Dendritic cell treated with granulocyte-macrophage colony-stimulating factor and Interleukin-4, amounts not matched to agents 40 ng/mL and 50 ng/mL, for 4 days (primary cell): ENCODE measurements at regions of chr11 and their contacts with region 1.

Region 1: GRCh38 chr11:107565219-107565937 is at the start of gene ALKBH8:
- H3K4me3 Mint-ChIP-seq: peak within 1 kb of the TSS; percentile 93
- H3K27ac Mint-ChIP-seq: peak within 1 kb of the TSS; percentile 97
- H3K4me1 Mint-ChIP-seq: peaks cover 35% of the 10 kb centered on the region
- H3K27me3 Mint-ChIP-seq: peaks cover 5% of the 10 kb centered on the region

Region 2: DNA sequence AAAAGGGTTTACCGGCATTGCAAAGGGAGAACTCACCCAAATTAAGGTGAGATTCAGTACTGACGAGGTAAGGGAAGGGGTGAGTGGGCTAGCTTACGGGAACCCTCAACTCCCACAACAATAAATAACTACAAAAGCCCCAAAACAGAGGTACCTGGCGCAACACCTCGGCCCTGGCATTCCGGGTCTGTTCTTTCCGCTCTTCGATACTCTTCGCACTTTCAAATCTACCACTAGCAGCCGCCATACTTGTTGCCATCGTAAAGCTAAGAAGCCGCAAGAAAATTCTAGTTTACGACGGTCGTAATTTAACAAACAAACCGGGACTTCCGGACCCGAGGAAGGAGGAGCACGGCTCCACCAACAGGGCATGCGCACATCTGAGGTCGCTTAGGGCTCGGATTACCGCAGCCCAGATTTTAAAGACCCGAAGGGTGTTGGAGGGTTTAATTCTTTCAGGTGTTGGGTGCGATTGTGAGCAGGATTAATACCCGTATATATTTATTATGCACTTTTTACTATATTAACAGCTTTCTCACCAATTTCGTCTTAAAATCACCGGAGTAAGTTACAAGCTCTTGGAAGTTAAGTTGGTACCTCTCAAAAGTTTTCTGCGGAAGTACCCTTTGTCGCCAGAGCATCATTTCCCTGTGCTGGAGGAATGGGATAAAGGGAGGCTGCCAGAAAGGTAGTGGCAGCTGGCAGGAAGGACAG is 107.7 kb before region 1 on chr11 and contains the start of gene CWF19L2:
- intact Hi-C with region 1: loop called (anchors 2 kb)
- H3K4me3 Mint-ChIP-seq: peak within 1 kb of the TSS; percentile 86
- H3K27ac Mint-ChIP-seq: peak within 1 kb of the TSS; percentile 91
- H3K4me1 Mint-ChIP-seq: peaks cover 16% of the 10 kb centered on the region
- H3K27me3 Mint-ChIP-seq: peaks cover 21% of the 10 kb centered on the region

Region 3: DNA sequence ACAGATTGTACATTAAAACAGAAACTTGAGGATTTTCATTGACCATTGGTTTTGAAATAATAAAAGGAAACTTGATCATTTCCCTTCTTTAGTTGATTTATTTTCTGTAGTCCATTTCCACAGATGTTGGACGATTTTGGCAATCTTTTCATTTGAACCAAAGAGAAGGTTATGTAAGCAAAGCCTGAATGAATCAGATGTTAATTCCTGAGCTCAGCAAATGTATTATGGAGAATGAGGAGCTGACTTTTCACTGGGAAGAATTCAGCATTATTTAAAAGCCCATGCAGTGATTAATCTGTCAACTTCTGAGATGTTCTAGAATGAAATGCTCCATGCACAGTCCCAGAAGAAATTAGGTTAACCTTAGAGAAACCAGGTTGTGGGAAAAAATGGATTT is 54.5 kb after region 1 on chr11:
- intact Hi-C with region 1: no loop called
- H3K4me3 Mint-ChIP-seq: no peak overlapping the region
- H3K27ac Mint-ChIP-seq: no peak overlapping the region
- H3K4me1 Mint-ChIP-seq: no peaks in the 10 kb centered on the region
- H3K27me3 Mint-ChIP-seq: peaks cover 7% of the 10 kb centered on the region

Region 4: GRCh38 chr11:107876141-107876540 is 310.8 kb after region 1 on chr11:
- intact Hi-C with region 1: no loop called
- H3K4me3 Mint-ChIP-seq: no peak overlapping the region
- H3K27ac Mint-ChIP-seq: no peak overlapping the region
- H3K4me1 Mint-ChIP-seq: no peaks in the 10 kb centered on the region
- H3K27me3 Mint-ChIP-seq: no peaks in the 10 kb centered on the region